ENCODE measurements at regions of chrX and their contacts with region 1.

Region 1: DNA sequence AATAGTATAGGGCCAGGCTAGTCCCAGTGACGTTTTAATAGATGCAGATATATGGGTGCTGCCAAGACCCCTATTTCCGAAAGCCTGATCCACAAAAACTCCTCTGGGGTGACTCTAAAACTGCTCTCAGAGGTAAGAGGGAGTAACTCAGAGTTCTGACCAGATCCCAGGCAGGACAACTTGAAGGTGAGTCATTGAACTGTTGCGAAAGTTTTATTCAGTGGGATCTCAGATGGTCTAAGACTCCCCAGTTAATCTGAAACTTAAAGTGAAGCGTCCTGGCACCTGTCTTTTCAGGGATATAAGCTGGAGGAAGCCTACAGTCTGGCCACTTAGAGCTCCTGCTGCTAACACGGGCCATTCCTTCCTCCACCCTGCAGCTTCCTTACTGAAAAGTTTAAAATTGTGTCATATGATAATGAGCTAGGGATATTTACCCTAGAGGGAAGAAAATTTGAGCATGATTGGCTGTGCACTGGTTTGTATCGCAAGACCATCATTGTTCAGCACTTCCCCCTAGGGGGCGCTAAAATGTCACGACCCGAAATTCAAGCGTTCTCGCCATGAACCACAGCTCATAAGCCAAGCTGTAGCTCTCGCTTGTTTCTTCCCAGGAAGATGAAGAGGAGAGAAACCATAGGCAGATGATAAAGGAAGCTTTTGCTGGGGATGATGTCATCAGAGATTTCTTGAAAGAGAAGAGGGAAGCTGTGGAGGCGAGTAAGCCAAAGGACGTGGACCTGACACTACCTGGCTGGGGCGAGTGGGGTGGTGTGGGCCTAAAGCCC is 19.5 kb downstream of the UTP14A start:
- DNase-seq: peak; percentile 47 to 90 (median 79)

Region 2: DNA sequence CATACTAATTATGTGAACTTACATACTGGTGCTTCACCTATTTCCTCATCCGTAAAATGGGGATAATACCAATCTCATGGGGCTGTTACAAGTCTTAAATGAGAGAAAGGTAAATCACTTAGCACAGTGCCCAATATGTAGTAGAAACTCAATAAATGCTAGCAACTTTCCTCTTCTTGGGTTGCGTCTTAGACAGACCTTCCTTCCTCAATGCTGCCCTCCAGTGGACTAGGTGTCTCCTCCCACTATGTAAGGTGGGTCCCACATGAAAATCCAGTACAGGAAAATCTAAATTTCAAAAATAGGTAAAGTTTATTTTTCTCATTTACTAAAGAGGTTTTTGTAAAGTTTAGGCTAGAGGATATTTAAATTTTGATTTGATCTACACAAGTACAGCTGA is 102.4 kb before region 1 on chrX:
- intact Hi-C with region 1: no loop called
- DNase-seq: peak in 21 of 42 donors; percentile 17 to 65 (median 38)

Region 3: GRCh38 chrX:130055103-130055502 is 129.6 kb after region 1 on chrX:
- intact Hi-C with region 1: loop called (anchors 2 kb)
- DNase-seq: no peak

Measured in head of caudate nucleus (tissue), 42 donors.